IMR-90 (cell line): ENCODE measurements at regions of chr3 and their contacts with region 1.

Region 1: DNA sequence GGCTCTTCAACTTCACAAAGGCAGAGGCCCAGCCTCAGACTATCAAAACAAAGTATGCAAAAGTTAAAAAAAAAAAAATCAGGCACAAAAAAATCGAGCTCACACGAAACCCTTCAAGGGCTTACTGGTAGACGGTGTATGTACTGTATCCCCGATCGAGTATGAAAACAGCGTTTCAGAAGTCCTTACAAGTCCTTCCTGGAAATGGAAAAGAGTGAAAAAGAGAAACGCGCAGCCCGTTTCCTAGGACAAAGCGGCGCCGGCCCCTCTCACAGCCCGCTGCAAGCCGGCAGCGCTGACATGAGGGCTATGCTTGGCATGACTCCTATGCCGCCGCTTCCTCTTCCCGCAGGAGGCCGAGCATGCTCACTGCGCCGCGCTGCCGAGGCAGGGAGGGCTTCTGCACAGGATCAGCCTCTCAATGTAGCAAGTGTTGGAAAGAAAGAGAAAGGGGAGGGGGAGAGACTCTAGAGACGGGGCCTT is at the start of gene VGLL4:
- DNase-seq: peak; percentile 94
- ATAC-seq: peak; percentile 82
- H3K4me3 ChIP-seq: peak within 1 kb of the TSS; percentile 90
- H3K27ac ChIP-seq: peak within 1 kb of the TSS; percentile 100
- H3K4me1 ChIP-seq: peaks cover 16% of the 10 kb centered on the region
- H3K27me3 ChIP-seq: no peaks in the 10 kb centered on the region
- CTCF ChIP-seq: peak; percentile 23
- POLR2A ChIP-seq: peak; percentile 93
- RAD21 ChIP-seq: peak; percentile 52
- total RNA-seq, gene VGLL4: 26.2 and 34.2 TPM in 2 replicates

Region 2: DNA sequence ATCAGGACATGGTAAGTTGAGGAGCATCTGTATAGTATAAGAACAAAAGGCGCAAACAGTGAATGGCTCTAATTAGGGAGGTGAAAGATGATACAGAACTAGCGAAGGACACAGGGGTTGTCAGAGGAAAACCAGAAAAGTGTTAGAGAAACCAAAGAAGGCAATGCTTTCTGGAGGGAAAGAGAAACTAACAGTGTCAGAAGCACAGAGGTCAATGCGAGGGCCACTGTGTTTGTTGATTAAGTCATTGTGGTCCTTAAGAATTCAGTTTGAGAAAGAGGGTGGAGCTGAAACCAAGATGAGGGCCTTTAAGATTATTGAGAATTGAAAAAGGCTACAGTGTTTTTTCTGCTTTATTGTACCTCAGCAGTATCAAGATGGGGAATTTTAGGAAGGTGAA is 342.7 kb before region 1 on chr3:
- CTCF ChIA-PET with region 1: no interaction called
- POLR2A ChIA-PET with region 1: no interaction called
- dilution Hi-C with region 1: no loop called
- in situ Hi-C with region 1: no loop called
- intact Hi-C with region 1: no loop called
- DNase-seq: peak; percentile 59
- ATAC-seq: peak; percentile 79
- H3K4me3 ChIP-seq: no peak overlapping the region
- H3K27ac ChIP-seq: no peak overlapping the region
- H3K4me1 ChIP-seq: peaks cover 4% of the 10 kb centered on the region; the same call in 1 of the 2 replicates
- H3K27me3 ChIP-seq: no peaks in the 10 kb centered on the region
- CTCF ChIP-seq: no peak
- POLR2A ChIP-seq: no peak
- RAD21 ChIP-seq: no peak

Region 3: GRCh38 chr3:11477407-11477911 is 166.2 kb before region 1 on chr3:
- CTCF ChIA-PET with region 1: no interaction called
- POLR2A ChIA-PET with region 1: no interaction called
- dilution Hi-C with region 1: no loop called
- in situ Hi-C with region 1: no loop called
- intact Hi-C with region 1: loop called (anchors 2 kb)
- DNase-seq: peak; percentile 96
- ATAC-seq: peak; percentile 94
- H3K4me3 ChIP-seq: no peak overlapping the region
- H3K27ac ChIP-seq: peak overlapping the region; percentile 90; the same call in 1 of the 2 replicates
- H3K4me1 ChIP-seq: peaks cover 15% of the 10 kb centered on the region
- H3K27me3 ChIP-seq: no peaks in the 10 kb centered on the region
- CTCF ChIP-seq: no peak
- POLR2A ChIP-seq: no peak
- RAD21 ChIP-seq: no peak; the same call in none of the 2 replicates

Region 4: GRCh38 chr3:11556851-11557644 is 86.6 kb before region 1 on chr3:
- CTCF ChIA-PET with region 1: interaction called, 6 read pairs
- POLR2A ChIA-PET with region 1: no interaction called
- dilution Hi-C with region 1: no loop called
- in situ Hi-C with region 1: loop called (anchors 10 kb)
- intact Hi-C with region 1: loop called (anchors 2 kb)
- DNase-seq: peak; percentile 88
- ATAC-seq: peak; percentile 33
- H3K4me3 ChIP-seq: no peak overlapping the region
- H3K27ac ChIP-seq: no peak overlapping the region
- H3K4me1 ChIP-seq: peaks cover 33% of the 10 kb centered on the region
- H3K27me3 ChIP-seq: no peaks in the 10 kb centered on the region
- CTCF ChIP-seq: no peak
- POLR2A ChIP-seq: no peak
- RAD21 ChIP-seq: no peak

Region 5: GRCh38 chr3:11582191-11582968 is 61.3 kb before region 1 on chr3:
- CTCF ChIA-PET with region 1: no interaction called
- POLR2A ChIA-PET with region 1: no interaction called
- dilution Hi-C with region 1: no loop called
- in situ Hi-C with region 1: no loop called
- intact Hi-C with region 1: loop called (anchors 1 kb)
- DNase-seq: peak; percentile 89
- ATAC-seq: peak; percentile 83
- H3K4me3 ChIP-seq: peak overlapping the region; percentile 23
- H3K27ac ChIP-seq: peak overlapping the region; percentile 84
- H3K4me1 ChIP-seq: peaks cover 28% of the 10 kb centered on the region
- H3K27me3 ChIP-seq: no peaks in the 10 kb centered on the region
- CTCF ChIP-seq: no peak
- POLR2A ChIP-seq: no peak
- RAD21 ChIP-seq: no peak